Caco-2 (cell line): ENCODE measurements at regions of chr17 and their contacts with region 1.

Region 1: DNA sequence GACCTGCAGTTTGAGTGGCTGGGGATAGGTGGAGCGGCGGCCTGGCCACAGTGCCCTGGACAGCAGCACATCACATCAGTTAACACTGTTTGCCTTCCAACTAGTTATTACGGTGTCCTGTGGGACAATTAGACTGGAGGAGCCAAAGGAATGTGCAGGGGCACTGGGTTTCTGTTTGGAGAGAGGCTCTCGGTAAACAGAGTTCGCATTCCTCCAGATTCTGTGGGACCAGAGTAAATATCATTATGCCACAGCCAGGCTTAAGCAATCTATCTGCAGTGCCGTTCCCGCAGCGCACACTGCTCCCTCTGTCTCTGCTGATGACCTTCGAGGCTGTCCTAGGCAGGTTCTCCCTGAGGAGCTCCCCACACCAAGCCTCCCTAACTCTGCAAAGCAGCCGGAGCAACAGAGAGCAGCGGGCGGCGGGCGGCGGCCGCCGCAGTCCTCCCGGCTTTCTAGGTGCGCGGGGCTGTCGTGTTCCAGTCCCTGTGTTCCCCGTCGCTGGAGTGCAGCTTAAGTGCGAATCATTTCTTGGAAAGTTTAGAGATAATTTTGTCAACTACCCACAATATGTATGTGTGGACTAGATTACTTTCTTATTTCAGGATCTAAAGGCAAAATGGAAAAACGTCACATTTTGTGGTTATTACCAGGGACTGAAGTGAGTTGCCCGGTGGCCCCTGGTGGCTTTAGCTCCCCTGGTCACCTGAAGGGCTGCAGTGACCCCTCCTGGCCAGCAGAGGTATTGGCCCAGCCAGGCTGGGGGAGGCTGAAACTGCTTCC is 43.2 kb downstream of the PGS1 start:
- DNase-seq: peak; percentile 93 to 96
- H3K4me3 ChIP-seq: peak overlapping the region; percentile 1; the same call in 1 of the 2 replicates
- H3K4me3 Mint-ChIP-seq: peak overlapping the region; percentile 72
- H3K27ac Mint-ChIP-seq: peak overlapping the region; percentile 95
- H3K4me1 ChIP-seq: peaks cover 37% of the 10 kb centered on the region
- H3K4me1 Mint-ChIP-seq: peaks cover 28% of the 10 kb centered on the region
- H3K27me3 ChIP-seq: no peaks in the 10 kb centered on the region
- H3K27me3 Mint-ChIP-seq: no peaks in the 10 kb centered on the region
- CTCF ChIP-seq: peak; percentile 98 to 99

Region 2: GRCh38 chr17:78289802-78290363 is 131.8 kb before region 1 on chr17:
- CTCF ChIA-PET with region 1: interaction called, 4 read pairs
- POLR2A ChIA-PET with region 1: no interaction called
- intact Hi-C with region 1: loop called (anchors 1 kb)
- DNase-seq: peak; percentile 81 to 85
- H3K4me3 ChIP-seq: no peak overlapping the region
- H3K4me3 Mint-ChIP-seq: no peak overlapping the region
- H3K27ac Mint-ChIP-seq: no peak overlapping the region
- H3K4me1 ChIP-seq: peaks cover 5% of the 10 kb centered on the region; the same call in 1 of the 2 replicates
- H3K4me1 Mint-ChIP-seq: no peaks in the 10 kb centered on the region
- H3K27me3 ChIP-seq: no peaks in the 10 kb centered on the region
- H3K27me3 Mint-ChIP-seq: no peaks in the 10 kb centered on the region
- CTCF ChIP-seq: peak; percentile 67 to 83

Region 3: GRCh38 chr17:78360371-78361224 is 61.1 kb before region 1 on chr17:
- CTCF ChIA-PET with region 1: interaction called, 57 read pairs
- POLR2A ChIA-PET with region 1: interaction called, 13 read pairs
- intact Hi-C with region 1: loop called (anchors 1 kb)
- DNase-seq: peak; percentile 96 to 99
- H3K4me3 ChIP-seq: peak overlapping the region; percentile 71
- H3K4me3 Mint-ChIP-seq: peak overlapping the region; percentile 85
- H3K27ac Mint-ChIP-seq: peak overlapping the region; percentile 91
- H3K4me1 ChIP-seq: peaks cover 53% of the 10 kb centered on the region
- H3K4me1 Mint-ChIP-seq: peaks cover 38% of the 10 kb centered on the region
- H3K27me3 ChIP-seq: no peaks in the 10 kb centered on the region
- H3K27me3 Mint-ChIP-seq: no peaks in the 10 kb centered on the region
- CTCF ChIP-seq: peak; percentile 94 to 95

Region 4: GRCh38 chr17:78378225-78379130 is 43.2 kb before region 1 on chr17 and contains the start of gene PGS1:
- CTCF ChIA-PET with region 1: interaction called, 3 read pairs
- POLR2A ChIA-PET with region 1: interaction called, 5 read pairs
- intact Hi-C with region 1: loop called (anchors 1 kb)
- DNase-seq: peak; percentile 75 to 86
- H3K4me3 ChIP-seq: peak within 1 kb of the TSS; percentile 96
- H3K4me3 Mint-ChIP-seq: peak within 1 kb of the TSS; percentile 93
- H3K27ac Mint-ChIP-seq: peak within 1 kb of the TSS; percentile 94
- H3K4me1 ChIP-seq: peaks cover 43% of the 10 kb centered on the region
- H3K4me1 Mint-ChIP-seq: peaks cover 48% of the 10 kb centered on the region
- H3K27me3 ChIP-seq: no peaks in the 10 kb centered on the region
- H3K27me3 Mint-ChIP-seq: no peaks in the 10 kb centered on the region
- CTCF ChIP-seq: no peak
- total RNA-seq, gene PGS1: 54.1 and 55.2 TPM in 2 replicates